Endothelial cell of umbilical vein (primary cell): ENCODE measurements at regions of chr1 and their contacts with region 1.

Region 1: GRCh38 chr1:44799770-44800584 is at the start of gene PLK3:
- DNase-seq: peak; percentile 98
- H3K4me3 ChIP-seq: peak within 1 kb of the TSS; percentile 68 to 75 (median 69)
- H3K27ac ChIP-seq: peak within 1 kb of the TSS; percentile 87
- H3K4me1 ChIP-seq: peaks cover 22% of the 10 kb centered on the region
- H3K27me3 ChIP-seq: no peaks in the 10 kb centered on the region
- CTCF ChIP-seq: peak; percentile 93 to 96
- POLR2A ChIP-seq: peak; percentile 100
- total RNA-seq, gene PLK3: 55.0 and 60.0 TPM in 2 replicates

Region 2: DNA sequence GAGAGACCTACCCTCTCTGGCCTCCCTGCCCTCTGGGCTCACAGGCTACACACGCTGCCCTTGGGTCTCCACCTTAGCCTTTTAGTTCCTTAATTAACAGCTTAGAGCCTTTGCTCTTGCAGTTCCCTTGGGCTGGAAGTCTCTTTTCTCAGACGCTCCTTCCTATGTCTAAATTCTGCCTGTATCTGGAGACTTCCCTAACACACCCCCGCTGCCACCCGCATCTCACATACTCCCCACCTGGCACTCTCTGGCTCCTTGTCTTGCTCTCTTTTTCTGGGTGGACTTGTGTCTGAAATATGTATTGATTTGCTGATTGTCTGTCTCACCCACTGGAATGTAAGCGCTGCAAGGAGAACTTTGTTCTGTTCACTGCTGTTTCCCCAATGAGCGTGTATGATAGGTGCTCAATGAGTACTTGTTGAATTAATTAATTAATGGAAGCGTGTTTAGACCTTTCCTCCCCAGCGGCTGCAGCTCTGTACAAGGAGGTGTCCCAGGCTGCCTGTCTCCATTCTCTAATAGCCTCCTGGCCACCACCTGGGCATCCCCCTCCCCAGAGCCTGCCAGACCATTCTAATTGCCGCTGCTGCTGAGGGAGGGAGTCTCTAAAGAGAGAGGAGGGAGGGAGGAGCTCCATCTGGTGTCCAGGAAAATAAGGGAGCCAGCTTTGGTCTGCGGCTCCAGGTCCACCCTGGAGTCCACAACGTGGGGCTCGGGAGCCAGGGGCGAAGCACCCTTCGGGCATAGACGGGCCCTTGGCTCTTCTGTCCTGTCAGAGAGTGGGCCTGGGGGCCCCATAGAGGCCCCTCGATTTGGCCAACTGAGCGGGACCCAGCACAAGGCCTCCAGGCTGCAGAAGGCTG is 299.6 kb before region 1 on chr1:
- CTCF ChIA-PET with region 1: no interaction called
- POLR2A ChIA-PET with region 1: no interaction called
- dilution Hi-C with region 1: no loop called
- intact Hi-C with region 1: no loop called
- DNase-seq: peak; percentile 59
- H3K4me3 ChIP-seq: no peak overlapping the region
- H3K27ac ChIP-seq: no peak overlapping the region
- H3K4me1 ChIP-seq: no peaks in the 10 kb centered on the region
- H3K27me3 ChIP-seq: peaks cover 26 to 29% of the 10 kb centered on the region in 2 experiments
- CTCF ChIP-seq: peak in 1 of 2 donors; percentile 48
- POLR2A ChIP-seq: no peak

Region 3: DNA sequence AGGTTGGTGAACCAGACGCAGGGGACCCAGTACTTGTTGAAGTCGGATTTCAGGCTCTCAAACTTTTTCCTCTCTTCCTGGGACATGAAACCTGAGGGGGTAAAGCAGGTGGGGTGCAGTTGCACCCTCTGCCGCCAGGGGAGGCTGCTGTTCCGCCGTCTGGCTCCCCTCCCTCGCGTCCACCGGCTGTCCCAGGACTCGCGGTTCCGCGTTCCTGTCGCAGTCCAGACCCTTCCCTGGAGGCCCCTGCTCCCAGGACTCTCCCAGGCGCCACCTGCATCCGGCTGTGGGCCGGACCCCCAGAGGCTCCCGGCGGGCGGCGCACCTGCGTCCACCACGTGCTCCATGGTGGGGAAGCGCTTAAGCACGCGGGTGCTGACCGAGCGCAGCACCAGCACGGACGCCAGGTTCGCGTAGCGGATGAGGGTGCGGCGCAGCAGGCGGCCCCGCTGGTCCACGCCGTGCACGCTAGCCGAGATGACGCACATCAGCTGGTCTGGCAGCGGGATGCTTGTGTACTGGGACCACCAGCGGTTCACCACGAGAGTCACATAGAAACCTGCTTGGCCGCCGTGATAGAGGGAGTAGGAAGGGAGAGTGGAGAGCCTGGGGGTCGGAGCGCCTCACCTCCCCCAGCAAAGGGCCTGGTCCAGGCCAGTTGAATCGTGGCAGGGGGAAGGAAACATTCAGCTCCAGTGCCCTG is 13.7 kb before region 1 on chr1:
- CTCF ChIA-PET with region 1: interaction called, 16 read pairs
- POLR2A ChIA-PET with region 1: interaction called, 8 read pairs
- dilution Hi-C with region 1: no loop called
- intact Hi-C with region 1: no loop called
- DNase-seq: peak; percentile 69
- H3K4me3 ChIP-seq: peak overlapping the region in 2 of 3 experiments; percentile 12 to 17
- H3K27ac ChIP-seq: no peak overlapping the region
- H3K4me1 ChIP-seq: peaks cover 10% of the 10 kb centered on the region
- H3K27me3 ChIP-seq: no peaks in the 10 kb centered on the region
- CTCF ChIP-seq: peak; percentile 98 to 99
- POLR2A ChIP-seq: no peak

Region 4: GRCh38 chr1:44812822-44813543 is 13.0 kb after region 1 on chr1:
- CTCF ChIA-PET with region 1: interaction called, 57 read pairs
- POLR2A ChIA-PET with region 1: interaction called, 75 read pairs
- dilution Hi-C with region 1: no loop called
- intact Hi-C with region 1: no loop called
- DNase-seq: no peak
- H3K4me3 ChIP-seq: no peak overlapping the region
- H3K27ac ChIP-seq: no peak overlapping the region
- H3K4me1 ChIP-seq: peaks cover 50% of the 10 kb centered on the region
- H3K27me3 ChIP-seq: no peaks in the 10 kb centered on the region
- CTCF ChIP-seq: no peak
- POLR2A ChIP-seq: no peak

Region 5: DNA sequence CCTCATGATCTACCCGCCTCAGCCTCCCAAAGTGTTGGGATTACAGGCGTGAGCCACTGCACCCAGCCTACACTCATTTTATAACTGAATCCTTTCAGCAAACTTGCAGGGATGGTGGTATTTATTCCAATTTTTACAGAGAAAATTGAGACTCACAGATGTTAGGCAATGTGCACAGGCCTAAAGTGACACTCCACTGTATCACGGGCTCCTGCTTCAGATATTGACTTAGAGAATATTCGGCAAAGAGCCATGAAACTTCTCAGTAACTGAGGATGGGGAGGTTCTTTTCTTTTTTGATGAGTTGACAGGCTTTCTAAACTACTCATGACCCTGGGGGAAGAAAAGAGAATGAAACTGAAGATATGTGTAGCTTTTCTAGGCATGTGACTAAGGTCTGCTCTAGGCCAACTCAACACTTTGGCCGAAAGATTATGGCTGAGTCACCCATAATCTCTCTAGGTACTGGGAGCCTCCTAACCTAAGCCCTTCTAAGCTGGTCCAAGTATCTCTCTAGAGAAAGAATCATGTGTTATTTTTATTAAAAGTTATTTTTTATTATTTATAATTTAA is 62.9 kb after region 1 on chr1:
- CTCF ChIA-PET with region 1: no interaction called
- POLR2A ChIA-PET with region 1: no interaction called
- dilution Hi-C with region 1: no loop called
- intact Hi-C with region 1: no loop called
- DNase-seq: no peak
- H3K4me3 ChIP-seq: no peak overlapping the region
- H3K27ac ChIP-seq: no peak overlapping the region
- H3K4me1 ChIP-seq: no peaks in the 10 kb centered on the region
- H3K27me3 ChIP-seq: no peaks in the 10 kb centered on the region
- CTCF ChIP-seq: no peak
- POLR2A ChIP-seq: no peak